ENCODE measurements at regions of chr6 and their contacts with region 1.

Region 1: DNA sequence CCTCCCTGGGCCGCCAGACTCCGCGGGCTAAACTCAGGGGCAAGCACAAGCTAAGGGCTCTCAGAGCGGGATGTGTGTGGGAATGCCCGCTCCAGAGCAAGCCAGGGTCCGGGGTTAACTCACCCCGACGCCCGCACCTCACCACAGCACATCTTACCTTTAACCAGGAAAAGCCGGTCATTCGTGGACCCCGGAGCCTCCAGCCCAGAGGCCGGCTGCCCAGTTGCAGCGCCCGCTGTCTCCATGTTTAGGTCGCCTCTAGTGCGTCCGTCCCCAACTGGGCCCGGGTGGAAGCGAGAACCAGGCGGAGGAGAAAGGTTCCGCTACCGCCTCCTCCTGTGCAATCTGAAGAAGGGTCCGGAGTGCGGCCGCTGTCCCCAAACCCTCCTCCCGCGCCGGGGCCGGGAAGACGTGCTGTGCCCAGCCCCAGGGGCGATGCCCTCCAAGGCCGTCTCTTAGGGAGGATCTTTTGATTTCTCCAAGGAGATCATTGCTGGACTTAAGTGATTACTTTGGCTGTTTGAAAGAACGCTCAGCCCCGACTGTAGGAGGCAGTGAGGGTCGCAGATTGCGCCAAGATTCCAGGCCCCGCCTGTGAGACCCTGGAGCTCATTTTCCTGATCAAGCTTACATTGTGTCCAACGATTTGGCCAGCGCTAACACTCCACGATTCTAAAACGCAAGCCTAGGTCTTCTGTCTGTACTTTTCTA is at the start of gene TMEM242:
- DNase-seq: peak; percentile 86
- H3K4me3 Mint-ChIP-seq: peak within 1 kb of the TSS; percentile 99
- H3K27ac Mint-ChIP-seq: peak within 1 kb of the TSS; percentile 91
- H3K4me1 Mint-ChIP-seq: peaks cover 49% of the 10 kb centered on the region
- H3K27me3 Mint-ChIP-seq: peaks cover 16% of the 10 kb centered on the region
- total RNA-seq, gene TMEM242: 10.1 and 12.7 TPM in 2 replicates

Region 2: GRCh38 chr6:157045831-157046454 is 277.5 kb before region 1 on chr6:
- intact Hi-C with region 1: no loop called
- DNase-seq: no peak
- H3K4me3 Mint-ChIP-seq: no peak overlapping the region
- H3K27ac Mint-ChIP-seq: no peak overlapping the region
- H3K4me1 Mint-ChIP-seq: peaks cover 7% of the 10 kb centered on the region
- H3K27me3 Mint-ChIP-seq: no peaks in the 10 kb centered on the region

Region 3: GRCh38 chr6:157274471-157275226 is 48.8 kb before region 1 on chr6:
- intact Hi-C with region 1: loop called (anchors 1 kb)
- DNase-seq: peak; percentile 78
- H3K4me3 Mint-ChIP-seq: peak overlapping the region; percentile 86
- H3K27ac Mint-ChIP-seq: peak overlapping the region; percentile 67
- H3K4me1 Mint-ChIP-seq: peaks cover 4% of the 10 kb centered on the region
- H3K27me3 Mint-ChIP-seq: peaks cover 10% of the 10 kb centered on the region

Region 4: GRCh38 chr6:157379656-157380454 is 56.4 kb after region 1 on chr6:
- intact Hi-C with region 1: loop called (anchors 1 kb)
- DNase-seq: peak; percentile 86
- H3K4me3 Mint-ChIP-seq: peak overlapping the region; percentile 88
- H3K27ac Mint-ChIP-seq: peak overlapping the region; percentile 83
- H3K4me1 Mint-ChIP-seq: peaks cover 39% of the 10 kb centered on the region
- H3K27me3 Mint-ChIP-seq: peaks cover 6% of the 10 kb centered on the region

Region 5: DNA sequence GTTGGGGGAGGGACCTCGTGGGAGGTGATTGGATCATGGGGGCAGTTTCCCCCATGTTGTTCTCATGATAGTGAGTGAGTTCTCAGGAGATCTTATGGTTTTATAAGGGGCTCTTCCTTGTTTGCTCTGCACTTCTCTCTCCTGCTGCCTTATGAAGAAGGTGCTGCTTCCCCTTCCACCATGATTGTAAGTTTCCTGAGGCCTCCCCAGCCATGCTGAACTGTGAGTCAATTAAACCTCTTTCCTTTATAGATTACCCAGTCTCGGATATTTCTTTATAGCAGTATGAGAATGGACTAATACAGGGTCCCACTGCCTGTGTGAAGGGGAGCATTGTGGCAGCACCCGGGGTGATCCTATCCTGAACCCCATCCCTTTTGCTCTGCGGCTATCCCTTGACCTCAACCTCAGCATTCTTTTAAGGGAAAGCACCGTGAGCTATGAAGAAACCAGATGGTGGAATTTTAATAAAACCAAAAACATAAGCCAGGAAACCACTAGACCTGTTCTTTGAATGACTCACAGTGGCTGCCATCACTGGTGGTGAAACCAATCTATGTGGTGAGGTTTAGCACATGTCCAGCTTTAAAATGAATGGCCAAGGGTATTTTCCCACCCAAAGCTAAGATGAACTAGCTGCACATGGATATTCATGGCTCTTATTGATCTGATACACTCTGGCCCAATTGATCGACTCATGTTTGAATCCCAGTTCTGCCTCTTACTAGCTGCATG is 119.8 kb after region 1 on chr6:
- intact Hi-C with region 1: loop called (anchors 5 kb)
- DNase-seq: no peak
- H3K4me3 Mint-ChIP-seq: peak overlapping the region; percentile 43
- H3K27ac Mint-ChIP-seq: peak overlapping the region; percentile 85
- H3K4me1 Mint-ChIP-seq: peaks cover 30% of the 10 kb centered on the region
- H3K27me3 Mint-ChIP-seq: peaks cover 3% of the 10 kb centered on the region

Region 6: DNA sequence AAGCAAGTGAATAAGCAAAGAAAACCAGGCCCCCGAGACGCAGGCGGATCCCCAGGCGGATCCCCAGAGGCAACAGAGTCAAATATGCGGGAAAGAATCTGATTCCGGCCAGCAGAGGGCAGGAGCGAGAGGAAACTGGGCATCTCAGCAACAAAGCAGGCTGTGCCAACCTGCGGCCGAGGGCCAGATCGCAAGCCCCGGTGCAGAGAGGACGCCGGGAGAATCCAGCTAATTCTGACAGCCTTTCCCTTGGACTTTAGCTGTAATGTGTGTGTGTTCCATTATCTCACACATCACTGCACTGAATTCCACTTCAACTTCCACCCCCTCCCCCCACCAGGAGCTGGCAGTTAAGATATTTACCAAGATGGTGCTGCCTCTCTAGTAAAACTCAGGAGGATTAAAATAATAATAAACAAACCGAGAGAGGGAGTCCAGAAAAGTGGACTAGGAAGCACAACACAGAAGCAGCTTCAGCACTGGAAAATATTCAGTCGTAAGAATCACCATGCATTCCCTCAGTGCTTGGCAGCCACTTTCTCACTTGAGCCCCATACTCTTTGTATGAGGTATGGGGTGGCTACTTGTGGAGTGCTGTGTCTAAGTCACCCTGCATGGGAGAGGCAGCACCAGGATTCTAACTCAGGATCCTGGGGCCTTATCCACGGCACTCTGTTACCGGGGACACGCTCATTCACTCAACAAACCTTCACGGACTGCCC is 433.5 kb after region 1 on chr6:
- intact Hi-C with region 1: loop called (anchors 2 kb)
- DNase-seq: peak; percentile 65
- H3K4me3 Mint-ChIP-seq: no peak overlapping the region
- H3K27ac Mint-ChIP-seq: peak overlapping the region; percentile 92
- H3K4me1 Mint-ChIP-seq: peaks cover 85% of the 10 kb centered on the region
- H3K27me3 Mint-ChIP-seq: peaks cover 6% of the 10 kb centered on the region

Region 7: GRCh38 chr6:157873735-157874344 is 550.4 kb after region 1 on chr6:
- intact Hi-C with region 1: loop called (anchors 10 kb)
- DNase-seq: peak; percentile 69
- H3K4me3 Mint-ChIP-seq: no peak overlapping the region
- H3K27ac Mint-ChIP-seq: no peak overlapping the region
- H3K4me1 Mint-ChIP-seq: peaks cover 29% of the 10 kb centered on the region
- H3K27me3 Mint-ChIP-seq: no peaks in the 10 kb centered on the region

Measured in activated T-helper 1 cell treated with anti-CD3 and anti-CD28 coated beads, Interleukin-12 subunit alpha, Interleukin-12 subunit beta, Interleukin-2, Interleukin-4 antibody, amounts not matched to agents 30 ng/mL and 10 ng/mL and 1 ng/mL, durations not matched to agents 14 hours and 24 hours and 36 hours (primary cell).